ENCODE measurements at regions of chr1 and their contacts with region 1.

Region 1: DNA sequence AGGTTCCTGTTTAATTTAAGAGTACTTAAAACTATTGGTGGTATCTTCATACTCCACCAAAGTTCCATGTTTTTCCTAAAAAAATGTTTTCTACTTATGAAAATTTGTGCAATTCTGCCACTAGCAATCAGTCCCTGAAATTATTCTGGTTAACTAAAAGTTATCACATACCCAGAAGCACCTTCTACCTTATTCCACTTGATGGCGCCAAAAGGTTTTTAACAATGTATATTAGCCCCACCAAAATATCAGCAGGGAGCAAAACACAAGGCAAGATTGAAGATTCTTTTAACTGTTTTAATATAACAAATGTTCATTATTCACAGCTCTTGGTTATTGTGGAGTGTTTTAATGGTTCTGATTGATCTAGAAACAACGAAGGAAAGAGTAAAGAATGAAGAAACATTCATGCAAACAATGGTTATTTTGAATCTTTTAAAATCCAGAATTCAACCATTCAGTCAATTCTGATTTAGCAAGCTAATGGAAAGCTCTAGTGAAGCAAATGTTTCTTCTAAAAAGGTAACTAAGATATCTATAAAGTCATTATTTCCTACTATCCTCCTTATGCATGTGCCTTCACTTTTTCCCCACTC is 67.2 kb downstream of the TTLL7 start:
- DNase-seq: peak; percentile 48
- H3K4me3 ChIP-seq: no peak overlapping the region
- H3K27ac ChIP-seq: no peak overlapping the region
- H3K4me1 ChIP-seq: no peaks in the 10 kb centered on the region
- H3K27me3 ChIP-seq: no peaks in the 10 kb centered on the region
- CTCF ChIP-seq: peak; percentile 33 to 42
- POLR2A ChIP-seq: no peak

Region 2: GRCh38 chr1:83872515-83872914 is 59.2 kb before region 1 on chr1:
- CTCF ChIA-PET with region 1: no interaction called
- POLR2A ChIA-PET with region 1: no interaction called
- dilution Hi-C with region 1: no loop called
- intact Hi-C with region 1: no loop called
- DNase-seq: no peak
- H3K4me3 ChIP-seq: no peak overlapping the region
- H3K27ac ChIP-seq: no peak overlapping the region
- H3K4me1 ChIP-seq: no peaks in the 10 kb centered on the region
- H3K27me3 ChIP-seq: no peaks in the 10 kb centered on the region
- CTCF ChIP-seq: no peak
- POLR2A ChIP-seq: no peak

Region 3: GRCh38 chr1:83942914-83943313 is 11.2 kb after region 1 on chr1:
- CTCF ChIA-PET with region 1: interaction called, 12 read pairs
- POLR2A ChIA-PET with region 1: no interaction called
- dilution Hi-C with region 1: no loop called
- intact Hi-C with region 1: no loop called
- DNase-seq: no peak
- H3K4me3 ChIP-seq: no peak overlapping the region
- H3K27ac ChIP-seq: no peak overlapping the region
- H3K4me1 ChIP-seq: no peaks in the 10 kb centered on the region
- H3K27me3 ChIP-seq: no peaks in the 10 kb centered on the region
- CTCF ChIP-seq: no peak
- POLR2A ChIP-seq: no peak

Region 4: GRCh38 chr1:83959824-83960498 is 28.2 kb after region 1 on chr1:
- CTCF ChIA-PET with region 1: interaction called, 10 read pairs
- POLR2A ChIA-PET with region 1: no interaction called
- dilution Hi-C with region 1: no loop called
- intact Hi-C with region 1: no loop called
- DNase-seq: no peak
- H3K4me3 ChIP-seq: no peak overlapping the region
- H3K27ac ChIP-seq: no peak overlapping the region
- H3K4me1 ChIP-seq: no peaks in the 10 kb centered on the region
- H3K27me3 ChIP-seq: no peaks in the 10 kb centered on the region
- CTCF ChIP-seq: no peak
- POLR2A ChIP-seq: no peak

Region 5: GRCh38 chr1:84122780-84123382 is 191.1 kb after region 1 on chr1:
- CTCF ChIA-PET with region 1: interaction called, 231 read pairs
- POLR2A ChIA-PET with region 1: no interaction called
- dilution Hi-C with region 1: no loop called
- intact Hi-C with region 1: loop called (anchors 1 kb)
- DNase-seq: peak; percentile 67
- H3K4me3 ChIP-seq: no peak overlapping the region
- H3K27ac ChIP-seq: no peak overlapping the region
- H3K4me1 ChIP-seq: no peaks in the 10 kb centered on the region
- H3K27me3 ChIP-seq: no peaks in the 10 kb centered on the region
- CTCF ChIP-seq: peak; percentile 42 to 51
- POLR2A ChIP-seq: no peak

Region 6: DNA sequence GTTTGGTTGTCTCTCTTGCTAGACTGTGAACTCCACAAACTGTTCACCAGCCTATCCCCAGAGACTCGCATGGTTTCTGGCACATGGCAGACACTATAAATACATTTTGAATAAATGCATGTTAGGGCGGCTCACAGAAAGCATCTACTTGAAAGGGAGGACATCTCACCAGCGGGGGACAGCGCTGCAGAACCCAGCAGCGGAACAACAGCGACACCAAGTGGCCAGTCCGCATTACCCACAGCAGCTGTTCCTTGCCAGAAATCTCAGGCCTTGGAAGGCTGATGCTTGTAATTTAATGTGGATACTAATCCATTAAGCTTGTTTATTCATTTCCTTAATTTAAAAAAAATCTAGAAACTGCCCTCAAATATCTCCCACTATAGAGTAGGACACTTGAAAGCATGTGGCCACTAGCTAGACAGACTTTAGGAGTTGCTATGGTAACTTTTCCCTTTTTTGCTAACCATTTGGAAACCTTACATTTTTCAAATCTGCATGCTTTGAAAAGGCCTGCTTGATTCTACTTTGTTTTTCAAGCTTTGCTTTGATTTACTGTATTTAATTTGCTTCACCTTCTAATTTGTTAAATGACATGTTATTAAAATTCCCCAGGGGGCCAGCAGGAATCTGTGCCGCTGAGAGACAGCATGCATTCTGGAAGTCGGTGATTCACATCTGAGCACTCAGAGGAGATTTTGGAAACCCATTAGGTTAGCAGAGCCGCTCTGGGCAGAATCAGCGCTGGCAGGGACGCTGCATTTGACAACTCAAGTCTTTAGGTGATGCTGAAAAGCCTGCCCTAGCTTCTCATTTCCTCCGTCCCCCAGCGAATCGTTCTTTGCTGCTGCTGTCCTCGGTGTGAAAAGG is 822.0 kb after region 1 on chr1:
- CTCF ChIA-PET with region 1: interaction called, 4 read pairs
- POLR2A ChIA-PET with region 1: no interaction called
- dilution Hi-C with region 1: no loop called
- intact Hi-C with region 1: loop called (anchors 1 kb)
- DNase-seq: peak; percentile 71
- H3K4me3 ChIP-seq: no peak overlapping the region
- H3K27ac ChIP-seq: no peak overlapping the region
- H3K4me1 ChIP-seq: no peaks in the 10 kb centered on the region
- H3K27me3 ChIP-seq: peaks cover 8 to 12% of the 10 kb centered on the region in 2 experiments
- CTCF ChIP-seq: peak; percentile 90 to 93
- POLR2A ChIP-seq: no peak

Region 7: GRCh38 chr1:84772428-84772943 is 840.7 kb after region 1 on chr1:
- CTCF ChIA-PET with region 1: interaction called, 10 read pairs
- POLR2A ChIA-PET with region 1: no interaction called
- dilution Hi-C with region 1: no loop called
- intact Hi-C with region 1: loop called (anchors 1 kb)
- DNase-seq: peak; percentile 74
- H3K4me3 ChIP-seq: no peak overlapping the region
- H3K27ac ChIP-seq: no peak overlapping the region
- H3K4me1 ChIP-seq: no peaks in the 10 kb centered on the region
- H3K27me3 ChIP-seq: peaks cover 2 to 12% of the 10 kb centered on the region in 2 experiments
- CTCF ChIP-seq: peak; percentile 83 to 87
- POLR2A ChIP-seq: no peak